SK-N-SH (cell line): ENCODE measurements at regions of chr4 and their contacts with region 1.

Region 1: GRCh38 chr4:140359562-140360427 is 13.7 kb upstream of the SCOC start:
- DNase-seq: peak; percentile 57
- H3K4me3 ChIP-seq: peak overlapping the region in 1 of 2 experiments; percentile 7; a peak in 1 of 4 replicates
- H3K27ac ChIP-seq: no peak overlapping the region
- H3K4me1 ChIP-seq: no peaks in the 10 kb centered on the region; a peak in 1 of 4 replicates
- H3K27me3 ChIP-seq: no peaks in the 10 kb centered on the region; the same call in 1 of the 2 replicates
- CTCF ChIP-seq: peak; percentile 93
- EP300 ChIP-seq: no peak
- RAD21 ChIP-seq: peak; percentile 75

Region 2: GRCh38 chr4:139656614-139657486 is 702.9 kb before region 1 on chr4:
- CTCF ChIA-PET with region 1: interaction called, 40 read pairs
- POLR2A ChIA-PET with region 1: no interaction called
- DNase-seq: peak; percentile 74
- H3K4me3 ChIP-seq: peak overlapping the region in 1 of 2 experiments; percentile 26; a peak in 2 of 4 replicates
- H3K27ac ChIP-seq: no peak overlapping the region
- H3K4me1 ChIP-seq: peaks cover 6 to 11% of the 10 kb centered on the region in 2 experiments; a peak in 2 of 4 replicates
- H3K27me3 ChIP-seq: no peaks in the 10 kb centered on the region
- CTCF ChIP-seq: peak; percentile 88
- EP300 ChIP-seq: no peak
- RAD21 ChIP-seq: peak; percentile 59

Region 3: DNA sequence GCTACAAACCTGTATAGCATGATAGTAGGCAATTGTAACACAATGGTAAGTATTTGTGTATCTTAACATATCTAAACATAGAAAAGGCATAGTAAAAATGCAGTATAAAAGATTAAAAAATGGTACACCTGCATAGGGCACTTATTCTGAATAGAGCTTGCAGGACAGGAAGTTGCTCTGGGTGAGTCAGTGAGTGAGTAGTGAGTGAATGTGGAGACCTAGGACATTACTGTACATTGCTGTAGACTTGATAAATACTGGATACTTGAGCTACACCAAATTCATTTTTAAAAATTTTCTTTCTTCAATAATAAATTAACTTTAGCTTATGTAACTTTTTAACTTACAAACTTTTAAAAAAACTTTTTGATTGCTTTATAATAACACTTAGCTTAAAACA is 137.6 kb before region 1 on chr4:
- CTCF ChIA-PET with region 1: no interaction called
- POLR2A ChIA-PET with region 1: no interaction called
- DNase-seq: no peak
- H3K4me3 ChIP-seq: no peak overlapping the region
- H3K27ac ChIP-seq: peak overlapping the region in 1 of 2 experiments; percentile 18; a peak in 1 of 4 replicates
- H3K4me1 ChIP-seq: no peaks in the 10 kb centered on the region
- H3K27me3 ChIP-seq: no peaks in the 10 kb centered on the region
- CTCF ChIP-seq: no peak
- EP300 ChIP-seq: no peak
- RAD21 ChIP-seq: no peak

Region 4: GRCh38 chr4:140343303-140343702 is 16.5 kb before region 1 on chr4:
- CTCF ChIA-PET with region 1: interaction called, 44 read pairs
- POLR2A ChIA-PET with region 1: no interaction called
- DNase-seq: no peak
- H3K4me3 ChIP-seq: no peak overlapping the region
- H3K27ac ChIP-seq: no peak overlapping the region
- H3K4me1 ChIP-seq: peaks cover 0 to 4% of the 10 kb centered on the region in 2 experiments; a peak in 1 of 4 replicates
- H3K27me3 ChIP-seq: no peaks in the 10 kb centered on the region; the same call in 1 of the 2 replicates
- CTCF ChIP-seq: no peak
- EP300 ChIP-seq: no peak
- RAD21 ChIP-seq: no peak

Region 5: DNA sequence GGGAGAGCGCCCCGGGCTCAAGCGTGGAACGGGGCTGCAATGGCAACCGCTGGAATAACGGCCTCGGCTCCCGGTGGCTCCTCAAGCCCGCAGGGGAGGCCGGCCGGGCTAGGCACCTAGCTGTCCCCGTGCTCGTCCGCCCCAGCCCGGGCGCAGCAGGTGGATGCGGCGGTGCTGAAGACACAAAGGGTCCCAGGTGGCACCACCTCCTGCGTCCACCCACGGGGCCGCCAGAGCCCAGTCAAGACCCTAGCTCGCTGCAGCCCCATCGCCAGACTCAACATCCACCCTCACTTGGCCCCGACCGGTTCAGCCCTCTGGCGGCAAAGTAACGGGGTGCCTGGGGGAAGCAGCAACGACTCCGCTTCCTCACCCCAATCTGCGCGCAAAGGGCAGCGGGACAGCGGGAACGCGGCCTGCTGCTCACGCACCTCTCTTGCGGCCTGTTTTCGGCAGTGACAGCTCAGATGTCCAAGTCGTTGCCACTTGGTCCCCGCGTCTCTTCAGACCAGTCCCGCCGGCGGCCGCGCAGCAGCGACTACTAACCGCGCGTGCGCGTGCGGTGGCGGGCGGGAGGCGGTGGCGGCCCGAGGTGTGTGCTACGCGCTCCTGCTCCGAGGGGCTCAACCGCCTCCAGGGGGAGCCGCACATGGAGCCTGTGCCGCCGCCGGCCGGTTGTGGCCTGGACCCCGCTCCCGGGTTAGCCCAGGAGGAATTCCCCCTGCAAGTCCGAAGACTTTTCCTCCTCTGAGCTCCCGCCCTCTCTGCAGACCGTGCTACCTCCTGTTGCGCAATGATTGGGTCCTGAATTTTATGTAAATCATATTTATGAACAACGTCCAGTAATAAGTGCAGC is 67.5 kb after region 1 on chr4 and contains the start of gene CLGN:
- CTCF ChIA-PET with region 1: interaction called, 35 read pairs
- POLR2A ChIA-PET with region 1: no interaction called
- DNase-seq: peak; percentile 95
- H3K4me3 ChIP-seq: peak within 1 kb of the TSS; percentile 78 to 83
- H3K27ac ChIP-seq: peak within 1 kb of the TSS in 1 of 2 experiments; percentile 82; a peak in 2 of 4 replicates
- H3K4me1 ChIP-seq: no peaks in the 10 kb centered on the region; a peak in 1 of 4 replicates
- H3K27me3 ChIP-seq: peaks cover 4% of the 10 kb centered on the region; the same call in 1 of the 2 replicates
- CTCF ChIP-seq: peak; percentile 59
- EP300 ChIP-seq: no peak
- RAD21 ChIP-seq: peak; percentile 43
- polyA plus RNA-seq, gene CLGN: 0.72 and 0.80 TPM in 2 replicates

Region 6: GRCh38 chr4:140609548-140610425 is 250.0 kb after region 1 on chr4:
- CTCF ChIA-PET with region 1: interaction called, 171 read pairs
- POLR2A ChIA-PET with region 1: no interaction called
- DNase-seq: peak; percentile 83
- H3K4me3 ChIP-seq: no peak overlapping the region
- H3K27ac ChIP-seq: peak overlapping the region in 1 of 2 experiments; percentile 45; a peak in 2 of 4 replicates
- H3K4me1 ChIP-seq: peaks cover 0 to 5% of the 10 kb centered on the region in 2 experiments; a peak in 2 of 4 replicates
- H3K27me3 ChIP-seq: no peaks in the 10 kb centered on the region; the same call in 1 of the 2 replicates
- CTCF ChIP-seq: peak; percentile 68
- EP300 ChIP-seq: no peak
- RAD21 ChIP-seq: peak; percentile 92

Region 7: DNA sequence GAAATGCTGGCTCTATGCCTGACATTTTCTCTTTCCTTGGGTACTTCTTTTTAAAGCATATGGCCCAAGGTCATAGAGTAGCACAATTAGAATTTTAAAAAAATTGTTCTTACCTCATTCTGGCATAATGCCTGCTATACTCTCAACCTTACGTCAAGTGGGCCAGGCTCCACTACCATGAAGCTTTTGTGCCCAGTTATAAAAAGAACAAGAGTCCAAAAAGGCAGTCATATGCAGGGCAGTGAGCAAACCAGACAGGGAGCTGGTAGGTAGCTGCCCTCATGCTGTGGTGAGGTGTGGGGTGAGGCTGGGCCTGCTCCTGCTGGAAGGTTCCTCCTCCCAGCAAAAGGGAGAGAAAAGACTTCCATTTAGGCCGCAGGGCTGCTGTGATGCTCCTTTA is 273.3 kb after region 1 on chr4:
- CTCF ChIA-PET with region 1: interaction called, 11 read pairs
- POLR2A ChIA-PET with region 1: no interaction called
- DNase-seq: no peak
- H3K4me3 ChIP-seq: no peak overlapping the region
- H3K27ac ChIP-seq: no peak overlapping the region
- H3K4me1 ChIP-seq: no peaks in the 10 kb centered on the region; a peak in 1 of 4 replicates
- H3K27me3 ChIP-seq: no peaks in the 10 kb centered on the region
- CTCF ChIP-seq: no peak
- EP300 ChIP-seq: no peak
- RAD21 ChIP-seq: no peak

Region 8: DNA sequence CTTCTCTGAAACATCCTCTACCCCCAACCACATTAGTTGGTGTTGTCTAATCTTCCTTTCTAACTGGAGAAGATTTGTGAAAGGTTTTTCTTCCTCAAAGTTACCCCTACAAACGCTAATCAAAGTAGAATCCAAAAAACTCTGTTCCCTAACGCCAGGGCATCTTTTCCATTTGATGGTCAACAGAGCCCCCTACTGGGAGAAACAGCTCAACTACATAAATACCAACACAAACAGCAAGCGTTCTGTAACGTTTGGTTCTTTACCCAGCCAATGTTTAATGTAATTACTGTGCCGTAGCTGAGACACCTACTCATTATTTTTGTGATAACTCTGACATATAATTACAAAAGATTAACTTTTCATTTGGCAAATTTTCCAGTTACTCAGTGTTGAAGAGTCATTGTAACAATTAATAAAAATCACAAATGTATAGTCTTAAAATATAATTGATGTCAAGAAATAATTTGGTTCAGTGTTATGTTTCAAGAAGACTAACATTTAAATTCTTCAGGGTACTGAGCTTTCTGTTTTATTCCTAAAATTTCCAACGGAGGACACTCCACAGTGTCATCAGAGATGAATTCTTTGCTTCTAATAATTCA is 491.3 kb after region 1 on chr4:
- CTCF ChIA-PET with region 1: interaction called, 79 read pairs
- POLR2A ChIA-PET with region 1: no interaction called
- DNase-seq: peak; percentile 54
- H3K4me3 ChIP-seq: no peak overlapping the region
- H3K27ac ChIP-seq: no peak overlapping the region
- H3K4me1 ChIP-seq: no peaks in the 10 kb centered on the region; a peak in 1 of 4 replicates
- H3K27me3 ChIP-seq: no peaks in the 10 kb centered on the region
- CTCF ChIP-seq: peak; percentile 95
- EP300 ChIP-seq: no peak
- RAD21 ChIP-seq: peak; percentile 98